Mammary epithelial cell (primary cell): ENCODE measurements at regions of chr14 and their contacts with region 1.

Region 1: DNA sequence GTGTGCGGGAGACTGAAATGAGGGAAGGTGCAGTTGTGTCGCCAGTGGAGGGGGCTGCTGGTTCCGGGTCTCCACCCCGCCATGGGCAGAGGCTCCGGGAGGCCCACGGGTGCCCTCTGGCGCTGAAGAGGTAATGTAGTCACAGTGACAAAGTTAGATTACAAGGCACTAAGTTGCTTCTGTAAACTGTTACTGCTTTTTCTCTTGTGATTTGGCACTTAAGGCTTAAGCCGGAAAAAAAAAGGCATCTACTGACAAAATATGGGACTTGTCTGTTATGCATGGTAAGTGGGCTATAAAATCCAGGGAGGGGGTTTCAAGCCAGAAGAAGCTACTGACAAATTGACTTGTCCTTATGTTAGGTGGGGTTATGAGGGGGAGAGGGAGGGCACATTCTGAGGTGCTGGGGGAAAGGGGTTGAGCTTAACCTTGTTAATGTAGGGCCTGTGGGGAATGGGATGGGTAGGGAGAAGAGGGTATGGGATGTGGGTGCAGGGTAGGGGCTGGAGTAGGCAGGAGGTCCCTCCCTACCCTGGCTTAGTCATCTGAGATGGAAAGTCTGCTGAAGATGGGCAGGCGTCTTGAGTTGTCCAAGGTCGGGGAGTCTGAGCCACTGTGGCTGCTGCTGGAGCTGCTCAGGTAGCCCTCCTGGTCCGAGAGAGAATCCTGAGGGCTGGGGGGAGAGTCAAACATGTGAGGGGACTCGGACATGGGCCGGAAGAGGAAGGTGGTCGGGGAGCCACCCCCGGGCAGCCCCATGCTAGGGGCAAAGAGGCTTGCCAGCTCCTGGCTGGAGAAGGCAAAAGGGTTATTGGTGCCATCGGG is 3.7 kb downstream of the ZFP36L1 start:
- DNase-seq: peak; percentile 59
- H3K4me3 ChIP-seq: peak overlapping the region; percentile 72 to 98 (median 90)
- H3K27ac ChIP-seq: peak overlapping the region; percentile 98
- H3K4me1 ChIP-seq: peaks cover 30% of the 10 kb centered on the region
- H3K27me3 ChIP-seq: no peaks in the 10 kb centered on the region
- CTCF ChIP-seq: peak; percentile 37 to 78

Region 2: GRCh38 chr14:68137704-68138619 is 651.2 kb before region 1 on chr14:
- CTCF ChIA-PET with region 1: no interaction called
- dilution Hi-C with region 1: no loop called
- in situ Hi-C with region 1: no loop called
- intact Hi-C with region 1: loop called (anchors 2 kb)
- DNase-seq: peak; percentile 99
- H3K4me3 ChIP-seq: no peak overlapping the region
- H3K27ac ChIP-seq: peak overlapping the region; percentile 99
- H3K4me1 ChIP-seq: peaks cover 63% of the 10 kb centered on the region
- H3K27me3 ChIP-seq: no peaks in the 10 kb centered on the region
- CTCF ChIP-seq: no peak

Region 3: GRCh38 chr14:68401855-68402254 is 387.4 kb before region 1 on chr14:
- CTCF ChIA-PET with region 1: no interaction called
- dilution Hi-C with region 1: no loop called
- in situ Hi-C with region 1: no loop called
- intact Hi-C with region 1: loop called (anchors 5 kb)
- DNase-seq: no peak
- H3K4me3 ChIP-seq: no peak overlapping the region
- H3K27ac ChIP-seq: peak overlapping the region; percentile 83
- H3K4me1 ChIP-seq: peaks cover 77% of the 10 kb centered on the region
- H3K27me3 ChIP-seq: no peaks in the 10 kb centered on the region
- CTCF ChIP-seq: no peak

Region 4: GRCh38 chr14:68548194-68549056 is 240.8 kb before region 1 on chr14:
- CTCF ChIA-PET with region 1: no interaction called
- dilution Hi-C with region 1: no loop called
- in situ Hi-C with region 1: loop called in 1 of 2 experiments (anchors 25 kb)
- intact Hi-C with region 1: loop called (anchors 1 kb)
- DNase-seq: peak; percentile 98
- H3K4me3 ChIP-seq: no peak overlapping the region
- H3K27ac ChIP-seq: peak overlapping the region; percentile 98
- H3K4me1 ChIP-seq: peaks cover 86% of the 10 kb centered on the region
- H3K27me3 ChIP-seq: no peaks in the 10 kb centered on the region
- CTCF ChIP-seq: no peak

Region 5: DNA sequence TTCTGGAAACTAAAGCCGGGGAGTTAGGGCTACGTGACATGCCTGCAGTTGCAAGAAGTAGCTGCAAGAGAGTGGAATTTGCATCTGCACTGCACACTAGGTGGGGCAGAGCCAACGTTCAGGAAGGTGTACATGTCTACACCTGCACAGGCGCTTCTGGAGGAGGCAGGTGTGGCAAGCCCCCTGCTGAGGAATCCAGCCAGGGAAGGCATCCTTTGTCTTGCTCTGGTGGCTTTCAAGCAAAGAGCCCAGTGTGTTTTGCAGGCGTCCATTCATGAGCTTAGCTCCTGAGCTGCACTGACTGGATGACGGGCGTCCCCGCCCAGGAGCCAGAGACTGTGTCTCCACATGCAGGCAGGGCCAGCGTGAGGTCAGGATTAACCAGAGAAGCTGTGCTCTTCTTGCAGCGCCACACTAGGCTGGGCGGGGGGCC is 112.7 kb before region 1 on chr14:
- CTCF ChIA-PET with region 1: interaction called, 5 read pairs
- dilution Hi-C with region 1: no loop called
- in situ Hi-C with region 1: no loop called
- intact Hi-C with region 1: loop called (anchors 1 kb)
- DNase-seq: peak; percentile 98
- H3K4me3 ChIP-seq: no peak overlapping the region
- H3K27ac ChIP-seq: peak overlapping the region; percentile 95
- H3K4me1 ChIP-seq: peaks cover 41% of the 10 kb centered on the region
- H3K27me3 ChIP-seq: no peaks in the 10 kb centered on the region
- CTCF ChIP-seq: peak in 1 of 2 donors; percentile 32

Region 6: GRCh38 chr14:68705741-68706283 is 83.4 kb before region 1 on chr14:
- CTCF ChIA-PET with region 1: no interaction called
- dilution Hi-C with region 1: no loop called
- in situ Hi-C with region 1: no loop called
- intact Hi-C with region 1: loop called (anchors 1 kb)
- DNase-seq: peak; percentile 90
- H3K4me3 ChIP-seq: no peak overlapping the region
- H3K27ac ChIP-seq: peak overlapping the region; percentile 15
- H3K4me1 ChIP-seq: peaks cover 42% of the 10 kb centered on the region
- H3K27me3 ChIP-seq: no peaks in the 10 kb centered on the region
- CTCF ChIP-seq: no peak

Region 7: GRCh38 chr14:69183735-69184134 is 394.5 kb after region 1 on chr14:
- CTCF ChIA-PET with region 1: no interaction called
- dilution Hi-C with region 1: no loop called
- in situ Hi-C with region 1: no loop called
- intact Hi-C with region 1: no loop called
- DNase-seq: no peak
- H3K4me3 ChIP-seq: no peak overlapping the region
- H3K27ac ChIP-seq: no peak overlapping the region
- H3K4me1 ChIP-seq: no peaks in the 10 kb centered on the region
- H3K27me3 ChIP-seq: no peaks in the 10 kb centered on the region
- CTCF ChIP-seq: no peak